ENCODE measurements at regions of chr19 and their contacts with region 1.

Region 1: GRCh38 chr19:41993612-41994483 is at the start of gene ATP1A3:
- DNase-seq: peak; percentile 83
- ATAC-seq: peak; percentile 76
- total RNA-seq, gene ATP1A3: 388 TPM

Region 2: DNA sequence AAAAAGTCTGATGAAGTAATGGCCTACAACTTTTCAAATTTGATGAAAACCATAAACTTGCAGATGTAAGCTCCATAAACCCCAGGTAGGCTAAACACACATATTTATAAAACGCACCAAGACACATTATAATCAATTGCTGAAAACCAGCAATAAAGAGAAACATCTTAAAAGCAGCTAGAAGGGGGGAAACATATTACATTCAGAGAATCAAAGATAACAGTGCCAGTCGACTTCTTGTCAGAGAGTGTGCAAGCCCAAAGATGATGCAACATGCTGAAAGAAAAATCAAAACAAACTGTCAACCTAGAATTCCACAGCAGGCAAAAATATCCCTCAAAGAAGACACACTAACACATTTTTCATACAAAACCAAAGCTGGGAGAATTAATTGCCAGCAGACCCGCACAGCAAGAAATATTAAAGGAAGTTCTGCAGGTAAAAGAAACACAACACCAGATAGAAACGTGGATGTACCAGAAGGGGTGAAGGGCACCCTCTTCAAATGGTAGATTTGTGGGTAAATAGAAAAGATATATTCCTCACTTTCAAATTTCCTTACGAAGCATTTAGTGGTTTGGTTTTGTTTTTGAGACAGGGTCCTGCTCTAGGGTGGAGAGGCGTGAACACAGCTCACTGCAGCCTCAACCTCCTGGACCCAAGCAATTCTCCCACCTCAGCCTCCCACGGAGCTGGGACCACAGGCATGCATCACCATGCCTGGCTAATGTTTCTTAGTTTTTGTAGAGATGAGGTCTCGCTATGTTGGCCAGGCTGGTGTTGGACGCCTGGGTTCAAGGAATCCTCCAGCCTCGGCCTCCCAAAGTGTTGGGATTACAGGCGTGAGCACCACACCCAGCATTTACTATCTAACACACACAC is 16.6 kb after region 1 on chr19:
- intact Hi-C with region 1: no loop called
- DNase-seq: no peak
- ATAC-seq: no peak

Region 3: DNA sequence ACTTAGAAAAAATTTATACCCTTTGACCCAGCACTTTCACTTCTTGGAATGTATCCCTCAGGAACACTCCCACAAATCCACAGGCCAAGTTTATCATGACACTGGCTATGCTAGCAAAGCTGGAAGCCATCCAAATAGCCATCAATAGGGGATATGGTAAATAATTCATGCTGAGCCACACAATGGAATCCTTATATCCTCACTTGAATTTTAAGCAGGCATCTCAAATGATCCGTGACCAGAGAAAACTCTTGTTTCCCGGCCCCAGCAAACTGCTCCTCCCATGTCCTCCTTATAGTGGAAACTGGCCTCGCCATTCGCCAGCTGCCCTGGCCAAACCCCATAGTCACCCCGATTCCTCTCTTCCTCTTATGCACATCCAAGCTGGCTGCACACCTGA is 38.6 kb after region 1 on chr19:
- intact Hi-C with region 1: loop called (anchors 5 kb)
- DNase-seq: no peak
- ATAC-seq: no peak

Region 4: DNA sequence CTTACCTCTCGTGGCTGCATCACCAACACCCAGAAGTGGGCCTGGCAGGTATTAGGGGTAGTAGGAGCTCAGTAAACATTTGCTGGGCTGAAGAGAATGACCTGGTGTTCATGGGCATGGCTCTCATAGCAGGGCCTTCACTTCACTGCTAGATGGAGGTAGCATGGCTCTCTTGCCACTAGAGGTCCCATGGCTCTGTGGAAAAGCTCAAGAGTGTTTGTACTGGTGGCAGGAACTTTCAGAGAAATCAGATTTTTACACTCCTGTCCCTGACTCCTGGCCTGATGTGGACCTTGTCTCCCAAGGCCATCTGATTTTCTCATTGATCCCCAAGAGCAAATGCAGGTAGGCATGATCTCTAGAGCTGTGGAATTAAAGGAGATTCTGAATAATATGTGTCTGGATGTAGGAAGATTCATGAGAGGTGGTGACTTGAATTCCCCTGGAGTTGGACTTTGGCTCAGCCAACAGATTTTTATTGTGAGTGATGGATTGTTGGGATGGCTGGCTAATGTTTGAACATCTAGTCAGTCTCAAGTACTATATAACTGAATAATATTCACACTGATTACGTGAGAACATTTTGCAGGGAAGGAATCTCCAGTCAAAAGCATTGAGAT is 87.8 kb after region 1 on chr19:
- intact Hi-C with region 1: loop called (anchors 10 kb)
- DNase-seq: no peak
- ATAC-seq: peak; percentile 16